Heart right ventricle (tissue), 16 donors: ENCODE measurements at regions of chr16 and their contacts with region 1.

Region 1: DNA sequence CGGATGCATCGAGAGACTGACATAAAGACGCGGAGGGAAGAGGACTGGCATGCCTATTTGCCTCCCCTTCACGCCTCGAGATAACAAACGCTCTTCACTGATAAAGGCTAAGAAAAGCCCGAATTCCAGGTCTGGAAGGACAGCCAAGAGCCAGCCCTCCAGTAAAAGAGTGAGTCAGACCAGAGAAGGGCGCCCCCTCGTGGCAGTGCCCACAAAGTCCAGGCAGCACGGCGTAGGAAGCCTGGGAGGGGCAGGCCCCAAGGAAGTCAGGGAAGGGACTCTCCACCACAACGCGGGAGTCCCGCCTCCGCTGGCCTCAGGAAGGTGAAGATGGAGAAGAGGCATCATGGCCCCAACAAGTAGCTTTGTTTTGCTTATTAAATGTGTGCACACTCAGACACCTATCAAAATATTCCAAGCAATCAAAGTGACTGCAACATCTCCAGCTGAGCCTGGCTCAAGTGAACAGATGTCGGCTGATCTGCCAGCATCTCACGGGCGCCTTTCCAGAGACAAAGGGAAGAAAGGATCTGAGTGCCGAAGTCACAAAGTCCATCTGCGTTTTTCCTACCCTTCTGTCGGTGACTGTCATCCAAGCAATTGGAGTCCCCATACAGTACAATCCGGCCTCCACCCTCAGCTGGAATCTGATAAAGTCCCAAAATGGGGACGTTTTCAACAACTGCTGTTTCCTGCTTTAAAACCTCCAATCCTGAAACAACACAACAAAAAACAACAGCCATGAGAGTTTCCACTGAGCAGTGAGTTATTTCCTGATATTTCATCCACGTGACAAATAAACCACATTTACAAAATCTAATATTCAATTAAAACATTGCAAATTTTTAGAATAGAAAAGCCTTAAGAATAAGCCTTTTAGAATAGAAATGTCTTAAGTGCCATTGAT is 20.4 kb upstream of the SLC38A8 start:
- DNase-seq: peak; percentile 79 to 81
- ATAC-seq: peak; percentile 81 to 92 (median 86)
- H3K4me3 ChIP-seq: no peak overlapping the region
- H3K27ac ChIP-seq: peak overlapping the region in 3 of 10 donors; percentile 3 to 21 (median 10)
- H3K4me1 ChIP-seq: peaks cover 0 to 28% (median 16%) of the 10 kb centered on the region in 9 donors
- H3K27me3 ChIP-seq: no peaks in the 10 kb centered on the region
- CTCF ChIP-seq: peak; percentile 78 to 91 (median 87)

Region 2: GRCh38 chr16:83793184-83793855 is 269.7 kb before region 1 on chr16:
- intact Hi-C with region 1: no loop called
- DNase-seq: no peak
- ATAC-seq: no peak
- H3K4me3 ChIP-seq: no peak overlapping the region
- H3K27ac ChIP-seq: no peak overlapping the region
- H3K4me1 ChIP-seq: no peaks in the 10 kb centered on the region
- H3K27me3 ChIP-seq: no peaks in the 10 kb centered on the region
- CTCF ChIP-seq: no peak

Region 3: DNA sequence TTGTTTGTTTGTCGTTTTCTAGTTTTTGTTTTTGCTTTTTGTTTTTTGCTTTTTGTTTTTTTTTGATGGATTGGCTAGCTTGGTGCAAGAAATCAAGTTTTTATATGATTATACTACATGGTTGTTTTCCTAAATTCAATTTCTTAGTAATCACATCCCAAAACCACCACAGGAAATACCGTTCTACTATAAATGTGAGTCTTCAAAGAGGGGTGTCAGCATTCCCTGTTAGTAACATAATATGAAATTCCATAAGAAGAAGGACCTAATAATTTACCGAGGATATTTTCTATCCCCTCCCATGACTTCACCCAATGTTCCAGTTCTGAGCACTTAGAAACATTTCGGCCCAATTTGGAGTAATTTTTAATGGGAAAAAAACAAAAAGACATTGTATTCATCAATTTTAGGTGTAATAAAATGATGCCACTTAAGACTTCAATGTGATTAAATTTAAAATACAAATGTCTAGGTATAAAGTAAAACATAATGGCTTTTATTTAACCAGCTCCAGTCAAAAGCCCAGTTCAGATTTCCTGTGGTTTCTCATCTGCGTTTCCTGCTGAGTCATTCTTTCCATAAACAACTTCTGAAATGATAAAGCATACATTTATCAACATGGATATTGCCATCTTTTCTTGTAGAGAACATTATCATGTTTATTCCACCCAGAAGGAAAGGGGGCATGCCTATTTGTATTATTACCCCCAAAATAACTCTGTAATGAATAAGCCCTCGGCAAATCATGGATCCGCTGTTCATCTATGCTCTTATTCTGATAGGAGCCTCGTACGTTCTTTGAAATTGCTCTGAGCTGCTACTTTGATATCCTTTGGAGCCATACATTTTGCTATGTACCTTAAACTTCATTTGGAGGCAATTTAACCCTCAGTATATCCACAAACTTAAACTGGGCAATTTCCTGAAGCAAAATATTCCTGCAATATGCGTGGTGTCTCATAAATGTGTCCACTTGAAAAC is 227.1 kb before region 1 on chr16:
- intact Hi-C with region 1: loop called in 1 of 10 experiments (anchors 10 kb)
- DNase-seq: no peak
- ATAC-seq: no peak
- H3K4me3 ChIP-seq: no peak overlapping the region
- H3K27ac ChIP-seq: no peak overlapping the region
- H3K4me1 ChIP-seq: peaks cover 0 to 9% (median 0%) of the 10 kb centered on the region in 9 donors
- H3K27me3 ChIP-seq: peaks cover 0 to 8% (median 0%) of the 10 kb centered on the region in 7 donors
- CTCF ChIP-seq: no peak

Region 4: DNA sequence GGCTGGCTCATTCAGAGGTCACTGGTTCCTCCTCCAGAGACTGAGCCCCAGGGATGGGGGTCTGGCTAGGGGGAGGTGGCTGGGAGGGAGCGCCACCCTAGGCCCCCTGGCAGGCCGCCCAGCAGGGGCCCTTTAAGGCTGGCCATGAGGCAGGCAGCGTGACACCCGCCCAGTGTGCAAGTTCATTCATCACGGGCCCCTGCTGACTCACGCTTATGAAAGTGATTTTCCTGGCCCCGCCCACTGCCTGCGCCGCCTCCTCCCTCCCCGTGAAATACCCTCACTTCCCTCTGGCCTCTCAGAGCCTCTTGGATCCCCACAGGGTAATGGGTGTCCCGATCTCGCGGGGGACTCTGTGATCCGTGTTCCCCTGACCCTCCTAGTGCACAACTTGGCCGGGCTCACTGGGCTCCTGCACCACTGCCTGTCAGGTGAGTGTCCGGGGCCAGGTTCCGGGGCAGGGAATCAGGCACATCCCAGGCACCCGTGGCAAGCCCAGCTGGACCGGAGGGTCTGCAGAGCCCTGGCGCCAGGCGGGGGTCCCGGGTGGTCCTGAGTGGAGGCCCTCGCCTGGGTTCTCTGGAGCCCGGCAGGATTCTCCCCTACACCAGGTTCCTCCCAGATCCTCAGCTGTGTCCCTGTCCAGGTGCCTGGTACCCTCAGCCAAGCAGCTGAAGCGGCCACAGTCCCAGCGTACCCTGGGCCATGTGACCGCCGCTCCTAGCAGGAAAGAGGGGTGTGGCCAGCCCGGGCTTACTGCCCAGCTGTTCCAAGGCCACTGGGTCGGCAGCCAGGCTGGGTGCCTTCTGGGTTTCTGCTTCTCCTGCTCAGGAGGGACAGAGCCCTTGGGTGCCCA is 109.8 kb before region 1 on chr16 and contains the start of gene OSGIN1:
- intact Hi-C with region 1: loop called in 3 of 10 experiments (anchors 2 to 5 kb)
- DNase-seq: peak; percentile 90 to 94
- ATAC-seq: peak; percentile 90 to 96 (median 94)
- H3K4me3 ChIP-seq: peak within 1 kb of the TSS; percentile 43 to 73 (median 63)
- H3K27ac ChIP-seq: peak within 1 kb of the TSS; percentile 78 to 97 (median 92)
- H3K4me1 ChIP-seq: peaks cover 11 to 45% (median 31%) of the 10 kb centered on the region in 9 donors
- H3K27me3 ChIP-seq: no peaks in the 10 kb centered on the region
- CTCF ChIP-seq: no peak
- total RNA-seq, gene OSGIN1: 3.2 to 14.5 (median 5.3) TPM

Region 5: DNA sequence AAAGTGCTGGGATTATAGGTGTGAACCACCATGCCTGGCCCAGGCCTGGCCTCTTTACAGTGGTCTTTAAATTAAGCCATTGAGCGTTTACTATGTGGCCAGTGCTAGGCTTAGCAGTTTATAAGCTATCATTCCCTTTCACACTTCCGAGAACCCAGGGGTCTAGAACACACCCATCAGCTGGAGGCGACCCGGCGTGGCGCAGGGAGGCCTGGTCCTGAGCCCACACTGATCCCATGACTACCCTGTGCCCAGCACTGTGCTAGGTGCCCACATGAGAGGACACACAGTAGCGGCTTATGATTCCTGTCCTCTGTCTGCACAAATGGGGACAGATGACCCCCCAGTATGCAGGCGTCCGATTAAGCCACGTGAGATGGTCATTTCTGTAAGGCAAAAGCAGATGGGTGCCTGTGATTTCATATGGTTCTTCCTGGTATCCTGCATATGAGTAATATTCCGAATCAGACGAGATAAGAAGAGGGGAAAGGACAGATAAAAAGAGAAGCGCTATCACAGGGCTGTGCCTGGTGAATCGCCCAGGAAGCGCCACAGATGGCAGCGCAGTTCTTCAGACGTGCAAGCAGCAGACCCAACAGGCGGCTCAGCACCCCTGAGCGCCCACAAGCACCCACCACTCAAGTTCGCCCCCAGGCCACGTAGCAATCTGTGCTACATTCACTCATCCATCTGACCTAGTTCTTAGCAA is 104.7 kb before region 1 on chr16:
- intact Hi-C with region 1: loop called in 4 of 10 experiments (anchors 2 to 5 kb)
- DNase-seq: no peak
- ATAC-seq: no peak
- H3K4me3 ChIP-seq: no peak overlapping the region
- H3K27ac ChIP-seq: peak overlapping the region in 8 of 10 donors; percentile 34 to 73 (median 61)
- H3K4me1 ChIP-seq: peaks cover 7 to 45% (median 27%) of the 10 kb centered on the region in 9 donors
- H3K27me3 ChIP-seq: no peaks in the 10 kb centered on the region
- CTCF ChIP-seq: no peak

Region 6: DNA sequence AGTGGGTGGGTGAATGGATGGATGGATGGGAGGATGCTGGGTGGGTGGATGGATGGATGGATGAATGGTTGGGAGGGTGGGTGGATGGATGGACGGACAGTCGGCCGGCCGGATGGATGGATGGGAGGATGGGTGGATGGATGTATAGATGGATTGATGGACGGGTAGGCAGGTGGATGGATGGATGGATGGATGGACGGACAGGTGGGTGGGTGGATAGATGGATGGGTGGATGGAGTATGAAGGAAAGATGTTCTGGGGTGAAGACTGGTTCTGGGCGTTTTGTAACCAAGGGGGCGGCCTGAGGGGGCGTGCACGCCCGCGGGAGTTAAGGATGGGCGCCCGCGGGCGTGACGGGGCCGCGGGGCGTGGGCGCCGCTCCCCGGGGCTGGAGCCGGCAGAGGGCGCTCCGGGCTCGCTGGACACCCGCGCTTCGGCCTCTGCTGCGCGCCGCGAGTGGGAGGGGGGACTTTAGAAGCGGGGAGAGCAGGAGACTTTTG is 95.1 kb before region 1 on chr16 and contains the start of gene NECAB2:
- intact Hi-C with region 1: loop called in 8 of 10 experiments (anchors 2 to 5 kb)
- DNase-seq: peak; percentile 40 to 62
- ATAC-seq: peak in 6 of 8 donors; percentile 22 to 65 (median 42)
- H3K4me3 ChIP-seq: peak within 1 kb of the TSS in 9 of 10 donors; percentile 29 to 47 (median 38)
- H3K27ac ChIP-seq: no peak within 1 kb of the TSS
- H3K4me1 ChIP-seq: peaks cover 0 to 10% (median 0%) of the 10 kb centered on the region in 9 donors
- H3K27me3 ChIP-seq: peaks cover 0 to 24% (median 8%) of the 10 kb centered on the region in 7 donors
- CTCF ChIP-seq: peak; percentile 33 to 81 (median 69)
- total RNA-seq, gene NECAB2: 0.32 to 1.1 (median 0.90) TPM

Region 7: GRCh38 chr16:84548971-84549844 is 486.2 kb after region 1 on chr16:
- intact Hi-C with region 1: no loop called
- DNase-seq: peak in 1 of 2 donors; percentile 17
- ATAC-seq: peak; percentile 47 to 81 (median 63)
- H3K4me3 ChIP-seq: peak overlapping the region in 1 of 10 donors; percentile 21
- H3K27ac ChIP-seq: peak overlapping the region in 4 of 10 donors; percentile 5 to 84 (median 40)
- H3K4me1 ChIP-seq: peaks cover 0 to 19% (median 5%) of the 10 kb centered on the region in 9 donors
- H3K27me3 ChIP-seq: peaks cover 0 to 28% (median 10%) of the 10 kb centered on the region in 7 donors
- CTCF ChIP-seq: no peak